ENCODE measurements at regions of chr6 and their contacts with region 1.

Region 1: DNA sequence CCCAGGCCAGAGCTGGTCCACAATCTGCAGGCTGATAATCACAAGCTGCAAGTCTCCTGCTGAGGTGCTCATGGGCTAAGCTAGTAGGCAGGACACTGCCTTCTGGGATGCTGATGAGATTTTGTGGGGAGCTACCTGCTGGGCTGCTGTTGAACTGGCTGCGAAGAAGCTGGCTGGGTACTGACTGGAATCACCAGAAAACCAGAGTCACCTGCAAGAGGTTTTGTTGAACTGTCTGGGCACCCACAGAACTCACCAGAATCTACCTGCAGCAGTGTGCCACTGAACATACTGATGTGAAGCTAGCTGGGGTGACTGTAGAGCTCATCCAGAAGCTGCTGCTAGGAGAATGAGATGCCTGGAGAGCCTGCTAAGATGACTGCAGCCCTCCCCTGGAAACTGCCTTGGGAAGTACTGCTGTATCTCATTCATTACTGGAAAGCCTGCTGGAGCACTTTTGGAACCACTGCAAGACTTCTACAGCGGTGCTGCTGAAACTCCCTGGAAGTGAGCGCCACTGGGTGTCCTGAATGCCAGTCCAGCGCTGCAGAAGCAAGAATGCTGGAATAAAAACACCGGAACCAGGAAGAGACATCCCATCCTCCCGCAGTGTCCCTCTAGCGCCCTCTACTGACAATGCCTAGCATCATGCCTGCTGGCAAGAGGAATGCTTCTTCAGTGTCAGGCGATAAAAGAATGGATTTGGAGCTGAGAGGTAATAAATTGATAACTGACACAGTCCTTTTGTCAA is 64.9 kb upstream of the ARHGAP18 start:
- DNase-seq: no peak
- H3K4me3 ChIP-seq: no peak overlapping the region; the same call in 1 of the 2 replicates
- H3K27me3 ChIP-seq: no peaks in the 10 kb centered on the region
- CTCF ChIP-seq: peak; percentile 99

Region 2: DNA sequence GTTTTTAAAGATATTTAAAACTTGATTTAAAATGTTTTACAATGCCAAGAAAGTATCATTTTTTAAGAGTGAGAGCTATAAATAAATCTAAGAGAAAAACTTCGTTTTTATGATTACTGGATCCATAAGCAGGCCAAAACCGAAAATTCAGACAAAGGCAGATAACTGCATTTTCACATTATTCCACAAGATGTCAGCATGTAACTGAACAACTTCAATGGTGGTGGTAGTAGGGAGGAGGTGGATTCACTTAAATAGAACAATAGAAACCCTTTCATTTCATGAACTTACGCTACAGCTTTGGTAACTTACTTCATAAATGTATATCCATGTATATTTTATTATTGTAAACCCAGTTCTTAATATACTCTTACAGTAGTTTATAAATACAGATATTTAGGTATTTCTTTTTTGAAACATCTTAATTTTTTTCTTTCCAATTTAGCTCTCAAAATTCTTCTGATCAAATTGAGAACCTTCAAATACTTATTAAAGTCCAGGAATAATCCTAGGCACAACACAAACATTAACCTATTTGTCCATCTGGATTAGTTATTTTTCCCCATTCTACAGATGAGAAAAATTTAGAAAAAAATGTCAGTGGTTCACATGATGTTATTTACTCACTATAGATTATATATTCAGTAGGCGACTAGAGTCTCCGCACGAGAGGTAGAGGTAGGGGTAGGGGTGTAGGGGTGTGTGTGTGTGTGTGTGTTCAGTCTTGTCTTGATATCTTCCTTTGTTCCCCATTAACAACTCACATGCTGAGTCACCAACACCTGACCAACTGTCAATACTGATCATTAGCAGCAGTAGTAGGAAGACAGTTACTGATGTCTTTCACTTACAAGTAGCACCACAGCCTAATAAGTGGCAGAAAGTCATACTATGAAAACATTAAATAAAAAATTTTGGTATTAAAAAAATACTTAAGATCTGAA is 176.4 kb before region 1 on chr6:
- CTCF ChIA-PET with region 1: interaction called, 40 read pairs
- POLR2A ChIA-PET with region 1: no interaction called
- DNase-seq: no peak
- H3K4me3 ChIP-seq: no peak overlapping the region
- H3K27me3 ChIP-seq: no peaks in the 10 kb centered on the region
- CTCF ChIP-seq: peak; percentile 62

Region 3: DNA sequence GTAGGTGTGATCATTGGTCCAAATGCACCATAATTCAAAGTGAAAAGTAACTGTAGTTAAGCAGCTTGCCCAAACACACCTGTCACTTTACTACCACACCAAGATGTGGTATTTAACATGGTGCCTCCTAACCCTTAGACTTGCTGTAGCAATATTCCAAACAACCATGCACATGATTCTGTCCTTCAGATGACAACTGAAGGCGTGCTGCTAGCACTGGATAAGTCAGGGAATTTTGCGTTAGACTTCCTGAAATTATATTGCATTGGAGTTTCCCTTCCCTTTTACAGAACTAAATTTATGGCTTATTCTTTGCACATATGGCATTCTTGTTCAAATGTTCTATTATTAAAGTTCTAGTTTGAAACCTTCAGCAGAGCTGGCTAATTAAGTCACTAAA is 171.1 kb before region 1 on chr6:
- CTCF ChIA-PET with region 1: interaction called, 40 read pairs
- POLR2A ChIA-PET with region 1: no interaction called
- DNase-seq: no peak
- H3K4me3 ChIP-seq: no peak overlapping the region
- H3K27me3 ChIP-seq: no peaks in the 10 kb centered on the region
- CTCF ChIP-seq: no peak

Region 4: DNA sequence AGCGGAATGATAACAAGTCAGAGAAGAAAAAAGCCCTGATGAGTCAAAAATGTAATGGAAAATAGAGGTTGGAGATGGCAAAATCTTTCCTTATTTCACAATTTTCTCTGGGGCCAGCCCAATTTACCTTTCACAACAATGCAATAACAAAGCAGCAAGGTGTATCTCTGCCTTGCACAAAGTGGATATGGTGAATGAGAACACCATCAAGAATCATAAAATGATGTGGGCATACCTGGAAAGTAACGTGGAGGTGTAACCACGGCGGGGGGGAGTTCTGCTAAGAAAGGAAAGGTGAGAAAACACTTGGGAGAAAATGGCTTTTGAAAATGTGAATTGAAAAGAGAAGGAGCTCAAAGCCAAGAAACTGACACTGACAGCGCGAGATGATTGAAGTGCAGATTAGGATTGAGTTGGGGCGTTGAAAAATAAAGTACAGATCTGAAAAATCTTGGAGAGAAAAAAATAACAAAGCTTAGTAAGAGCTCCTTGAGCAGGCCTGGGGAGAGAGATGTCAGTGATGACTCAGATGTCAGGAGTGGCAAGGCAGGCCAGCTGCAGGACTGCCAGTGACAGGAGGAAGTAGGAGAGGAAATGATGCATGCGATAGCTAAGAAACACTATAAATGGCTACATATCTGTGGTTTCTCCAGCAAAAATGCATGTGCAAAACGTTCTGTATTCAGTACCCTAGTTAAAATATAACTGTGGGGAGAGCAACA is 91.1 kb before region 1 on chr6:
- CTCF ChIA-PET with region 1: no interaction called
- POLR2A ChIA-PET with region 1: no interaction called
- DNase-seq: peak; percentile 96
- H3K4me3 ChIP-seq: no peak overlapping the region
- H3K27me3 ChIP-seq: no peaks in the 10 kb centered on the region
- CTCF ChIP-seq: no peak

Region 5: DNA sequence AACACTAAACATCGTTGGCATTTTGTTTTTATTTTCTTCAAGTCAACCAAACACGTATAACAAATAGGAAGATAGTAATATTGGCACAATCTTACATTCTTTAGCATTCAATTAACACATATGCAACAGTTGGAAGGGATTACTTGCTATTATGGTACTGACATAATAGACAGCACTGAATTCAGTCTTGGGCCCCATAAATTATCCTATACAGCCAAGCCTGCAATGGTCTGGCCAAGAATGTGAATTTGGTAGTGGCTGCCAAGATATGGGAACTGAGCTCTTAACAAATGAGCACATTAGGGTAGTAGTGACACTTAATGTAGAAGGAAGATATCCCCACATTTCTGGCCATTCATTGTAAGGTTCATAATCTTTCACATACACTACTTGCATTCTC is 20.1 kb before region 1 on chr6:
- CTCF ChIA-PET with region 1: interaction called, 18 read pairs
- POLR2A ChIA-PET with region 1: no interaction called
- DNase-seq: no peak
- H3K4me3 ChIP-seq: no peak overlapping the region
- H3K27me3 ChIP-seq: no peaks in the 10 kb centered on the region
- CTCF ChIP-seq: no peak

Region 6: GRCh38 chr6:129785047-129785755 is 10.3 kb after region 1 on chr6:
- CTCF ChIA-PET with region 1: interaction called, 25 read pairs
- POLR2A ChIA-PET with region 1: no interaction called
- DNase-seq: no peak
- H3K4me3 ChIP-seq: no peak overlapping the region
- H3K27me3 ChIP-seq: no peaks in the 10 kb centered on the region
- CTCF ChIP-seq: no peak

Region 7: DNA sequence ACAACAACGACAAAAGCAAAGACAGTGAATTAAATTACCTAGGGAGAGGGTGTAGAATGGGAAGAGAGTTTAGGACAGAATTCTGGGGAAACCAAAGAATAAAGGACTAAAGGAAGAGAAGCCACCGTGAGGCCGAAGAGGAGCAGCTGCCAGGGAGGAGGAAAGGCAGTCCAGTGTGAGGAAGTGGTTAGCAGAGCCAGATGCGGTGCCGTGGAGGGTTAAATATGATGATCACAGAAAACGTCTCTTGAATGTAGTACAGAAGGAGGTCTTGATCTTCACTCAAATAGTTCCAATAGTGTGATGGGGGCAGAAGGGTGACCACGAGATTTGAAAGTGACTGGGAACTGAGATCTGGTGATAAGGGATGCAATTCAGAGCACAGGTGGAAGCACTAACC is 18.6 kb after region 1 on chr6:
- CTCF ChIA-PET with region 1: interaction called, 14 read pairs
- POLR2A ChIA-PET with region 1: no interaction called
- DNase-seq: no peak
- H3K4me3 ChIP-seq: no peak overlapping the region
- H3K27me3 ChIP-seq: no peaks in the 10 kb centered on the region; the same call in 1 of the 2 replicates
- CTCF ChIP-seq: no peak